ENCODE measurements at regions of chr3 and their contacts with region 1.

Region 1: DNA sequence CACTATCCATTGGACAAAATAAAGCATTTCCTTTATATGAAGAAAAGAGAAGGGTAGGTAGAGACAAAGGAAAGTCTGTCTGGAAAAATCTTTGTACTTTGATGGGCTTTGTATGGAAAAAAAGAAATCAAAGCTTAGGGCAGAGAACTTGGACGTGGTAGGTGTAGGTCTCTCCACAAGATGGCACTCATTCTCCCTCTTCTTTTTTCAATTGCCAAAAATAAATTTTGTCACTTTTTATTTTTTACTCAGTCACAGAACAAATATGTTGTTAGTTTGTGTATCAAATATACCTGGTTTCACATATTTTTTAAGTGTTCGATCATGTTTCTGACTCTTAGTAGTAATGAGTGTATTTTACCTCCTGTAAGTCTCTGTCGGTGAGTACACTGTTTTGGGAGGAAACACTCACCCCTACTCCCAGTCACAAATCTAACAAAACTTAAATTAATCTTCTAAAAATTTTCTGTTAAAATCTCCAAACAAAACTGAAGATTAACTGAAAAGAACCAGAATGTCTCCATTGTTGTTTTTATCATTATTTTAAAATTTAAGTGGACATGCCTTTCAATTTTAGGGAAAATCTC is 415.8 kb upstream of the GOLIM4 start:
- DNase-seq: no peak
- ATAC-seq: no peak
- H3K4me3 Mint-ChIP-seq: no peak overlapping the region
- H3K27ac Mint-ChIP-seq: no peak overlapping the region
- H3K4me1 Mint-ChIP-seq: no peaks in the 10 kb centered on the region
- H3K27me3 Mint-ChIP-seq: no peaks in the 10 kb centered on the region

Region 2: GRCh38 chr3:168847291-168847883 is 335.9 kb after region 1 on chr3:
- CTCF ChIA-PET with region 1: no interaction called
- POLR2A ChIA-PET with region 1: no interaction called
- intact Hi-C with region 1: loop called (anchors 2 to 5 kb)
- DNase-seq: peak; percentile 11
- ATAC-seq: no peak
- H3K4me3 Mint-ChIP-seq: no peak overlapping the region
- H3K27ac Mint-ChIP-seq: no peak overlapping the region
- H3K4me1 Mint-ChIP-seq: no peaks in the 10 kb centered on the region
- H3K27me3 Mint-ChIP-seq: peaks cover 17% of the 10 kb centered on the region

Measured in activated CD4-positive, alpha-beta T cell treated with anti-CD3 and anti-CD28 coated beads for 36 hours (primary cell).